Calu3 (cell line): ENCODE measurements at regions of chr17 and their contacts with region 1.

Region 1: DNA sequence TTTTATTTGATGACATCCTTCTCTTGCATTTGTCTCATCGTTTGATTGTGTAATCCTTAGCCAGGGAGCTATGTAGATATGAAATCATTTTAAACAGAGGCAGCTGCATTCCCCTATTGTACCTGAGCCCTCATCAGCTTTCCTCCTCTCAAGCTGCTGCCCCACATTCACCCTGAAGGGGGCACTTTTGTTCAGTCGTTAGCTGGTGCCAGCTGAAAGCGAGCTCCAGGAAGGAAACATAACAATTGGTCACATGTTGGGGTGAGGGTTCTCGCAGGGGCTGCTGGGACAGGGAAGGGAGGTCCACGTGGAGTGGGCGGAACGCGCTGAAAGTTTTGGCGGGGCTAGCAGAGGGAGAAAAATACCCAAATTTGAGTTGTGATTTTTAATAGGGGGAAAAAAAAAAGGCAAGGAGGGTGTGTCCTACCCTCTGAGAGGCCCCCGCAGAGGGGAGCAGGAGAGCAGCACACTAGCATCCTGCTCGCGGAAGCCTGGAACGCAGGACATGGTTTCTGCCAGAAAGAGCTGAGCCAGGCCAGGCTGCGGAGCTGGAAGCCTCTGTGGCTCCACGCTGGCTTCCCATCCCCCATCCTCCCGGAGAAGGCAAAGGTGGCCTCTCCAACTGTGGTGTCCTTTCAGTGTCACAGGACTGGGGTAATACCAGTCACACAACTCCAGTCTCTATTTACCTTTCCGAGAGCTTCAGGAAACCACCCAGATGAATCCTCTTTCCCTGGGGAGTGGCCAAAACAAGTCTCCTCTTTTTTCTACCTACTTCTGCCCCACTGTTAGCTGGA is 8.5 kb upstream of the MSL1 start:
- DNase-seq: peak; percentile 100
- H3K4me3 Mint-ChIP-seq: peak overlapping the region; percentile 65
- H3K27ac Mint-ChIP-seq: peak overlapping the region; percentile 74
- H3K4me1 Mint-ChIP-seq: peaks cover 58% of the 10 kb centered on the region
- H3K27me3 Mint-ChIP-seq: no peaks in the 10 kb centered on the region
- CTCF ChIP-seq: no peak

Region 2: DNA sequence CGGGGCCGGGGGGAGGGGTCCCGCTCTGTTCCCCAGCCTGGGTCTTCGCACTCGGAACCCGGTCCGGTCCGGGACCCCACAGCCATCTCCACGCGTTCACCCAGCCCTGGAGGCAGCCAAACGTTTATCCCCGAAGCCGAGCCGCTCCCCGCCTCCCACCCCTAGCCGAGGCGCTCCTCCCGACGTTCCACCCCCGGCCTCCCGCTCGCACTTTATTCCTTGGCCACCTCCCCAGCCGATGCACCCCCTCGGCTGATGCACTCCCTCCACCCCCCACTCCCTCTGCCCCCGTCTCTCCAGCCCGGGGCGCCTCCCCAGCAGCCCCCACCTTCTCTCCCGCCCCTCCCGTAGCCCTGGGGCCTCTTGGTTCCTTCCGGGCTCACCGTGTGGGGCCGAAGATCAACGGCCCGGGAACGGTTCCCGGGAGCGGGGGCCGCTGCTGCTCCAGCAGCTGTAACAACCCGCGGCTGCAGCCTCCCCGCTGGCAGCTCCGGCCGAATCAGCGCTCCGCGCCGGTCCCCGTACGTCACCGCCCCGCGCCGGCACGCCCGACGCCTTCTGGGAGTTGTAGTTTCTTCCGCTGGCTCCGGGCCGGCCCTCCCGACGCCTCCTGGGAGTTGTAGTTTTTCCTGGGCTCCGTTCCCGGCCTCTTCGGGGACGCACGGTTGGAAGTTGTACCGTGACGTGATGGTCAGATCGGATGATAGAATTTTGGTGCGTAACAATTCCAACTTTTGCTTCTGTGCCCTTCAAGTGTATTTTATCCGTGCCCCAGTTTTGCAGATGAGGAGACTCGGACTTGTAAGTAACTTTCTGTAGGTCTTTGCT is 186.0 kb before region 1 on chr17 and contains the starts of genes LRRC3C and ORMDL3:
- CTCF ChIA-PET with region 1: interaction called, 11 read pairs
- intact Hi-C with region 1: no loop called
- DNase-seq: no peak
- H3K4me3 Mint-ChIP-seq: peak within 1 kb of the TSS; percentile 74
- H3K27ac Mint-ChIP-seq: peak within 1 kb of the TSS; percentile 66
- H3K4me1 Mint-ChIP-seq: peaks cover 60% of the 10 kb centered on the region
- H3K27me3 Mint-ChIP-seq: no peaks in the 10 kb centered on the region
- CTCF ChIP-seq: no peak
- total RNA-seq, gene LRRC3C: not detected in 2 replicates
- total RNA-seq, gene ORMDL3: 1,738 and 1,968 TPM in 2 replicates

Region 3: DNA sequence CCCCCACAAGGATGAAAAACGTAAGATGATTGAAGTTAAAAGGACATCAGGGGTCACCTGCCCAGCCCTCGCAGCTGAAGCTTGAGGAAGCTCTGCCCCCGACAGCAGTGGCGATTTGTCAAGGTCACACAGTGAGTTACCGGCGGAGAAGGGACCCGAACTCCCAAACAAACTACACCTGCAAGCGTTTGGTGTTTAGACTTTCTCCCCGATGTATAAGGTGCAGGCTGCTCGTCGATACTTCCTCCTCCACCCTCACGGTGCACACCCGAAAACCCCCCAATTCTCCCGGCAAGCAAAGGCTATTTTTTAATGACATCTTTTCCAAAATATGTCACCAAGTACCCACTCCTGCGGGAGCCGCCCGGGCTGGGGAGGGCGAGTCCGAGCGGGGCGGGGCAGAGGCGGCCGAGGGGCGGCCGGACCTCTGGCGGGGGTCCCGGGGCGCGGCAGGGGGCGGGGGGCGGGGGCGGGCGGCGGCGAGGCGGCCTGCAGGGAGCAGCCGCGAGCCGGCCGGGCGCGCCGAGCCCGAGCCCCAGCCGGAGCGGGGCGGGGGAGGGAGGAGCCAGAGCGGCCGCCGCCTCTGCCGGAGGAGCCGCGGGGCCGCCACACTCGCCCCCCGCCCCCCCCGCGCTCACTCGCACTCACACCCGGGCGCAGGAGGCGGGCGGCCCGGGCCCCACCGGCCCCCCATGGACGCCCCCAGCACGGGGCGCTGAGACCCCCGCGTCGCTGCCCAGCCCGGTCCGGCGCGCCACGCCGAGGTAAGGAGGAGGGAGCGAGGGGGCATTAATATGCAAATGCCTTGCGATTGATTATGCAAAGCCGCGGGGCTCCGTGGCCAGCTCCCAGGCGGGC is 50.8 kb before region 1 on chr17 and contains the start of gene THRA:
- CTCF ChIA-PET with region 1: interaction called, 670 read pairs
- intact Hi-C with region 1: loop called (anchors 1 kb)
- DNase-seq: peak; percentile 100
- H3K4me3 Mint-ChIP-seq: peak within 1 kb of the TSS; percentile 54
- H3K27ac Mint-ChIP-seq: peak within 1 kb of the TSS; percentile 27
- H3K4me1 Mint-ChIP-seq: peaks cover 55% of the 10 kb centered on the region
- H3K27me3 Mint-ChIP-seq: peaks cover 52% of the 10 kb centered on the region
- CTCF ChIP-seq: no peak
- total RNA-seq, gene THRA: 107 and 133 TPM in 2 replicates

Region 4: DNA sequence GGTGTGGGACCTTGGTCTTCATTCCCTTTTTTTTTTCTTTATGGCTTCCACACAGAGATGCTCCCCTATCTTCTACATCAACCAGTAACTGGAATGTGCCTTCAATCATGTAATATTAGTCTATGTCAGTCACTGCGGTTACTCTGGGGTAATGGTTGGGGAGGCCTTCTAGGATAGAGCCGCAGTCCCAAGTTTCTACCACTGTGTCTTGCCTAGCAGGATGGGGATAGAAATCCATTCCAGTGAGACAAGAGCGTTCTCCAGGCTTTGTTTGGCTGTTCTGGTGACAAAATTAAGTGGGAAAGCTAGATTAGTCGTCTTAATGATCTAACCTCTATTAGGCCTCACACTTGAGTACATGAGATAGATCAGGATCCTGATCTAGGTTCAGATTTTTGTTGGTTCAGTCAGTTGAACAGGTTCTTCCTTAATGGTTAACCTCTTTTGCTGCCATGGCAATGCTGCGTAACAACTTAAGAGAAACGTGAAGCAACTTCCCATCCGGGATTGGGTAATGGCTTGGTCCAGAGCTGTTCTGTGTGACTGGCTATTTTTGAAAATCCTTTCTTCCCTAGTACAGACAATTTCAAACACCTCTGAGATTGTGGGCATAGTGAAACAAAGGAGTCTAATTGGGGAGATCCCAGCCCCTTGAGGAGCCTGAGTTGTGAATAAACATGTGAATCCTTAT is 17.2 kb after region 1 on chr17:
- CTCF ChIA-PET with region 1: interaction called, 386 read pairs
- intact Hi-C with region 1: no loop called
- DNase-seq: no peak
- H3K4me3 Mint-ChIP-seq: no peak overlapping the region
- H3K27ac Mint-ChIP-seq: peak overlapping the region; percentile 1
- H3K4me1 Mint-ChIP-seq: peaks cover 38% of the 10 kb centered on the region
- H3K27me3 Mint-ChIP-seq: no peaks in the 10 kb centered on the region
- CTCF ChIP-seq: no peak

Region 5: DNA sequence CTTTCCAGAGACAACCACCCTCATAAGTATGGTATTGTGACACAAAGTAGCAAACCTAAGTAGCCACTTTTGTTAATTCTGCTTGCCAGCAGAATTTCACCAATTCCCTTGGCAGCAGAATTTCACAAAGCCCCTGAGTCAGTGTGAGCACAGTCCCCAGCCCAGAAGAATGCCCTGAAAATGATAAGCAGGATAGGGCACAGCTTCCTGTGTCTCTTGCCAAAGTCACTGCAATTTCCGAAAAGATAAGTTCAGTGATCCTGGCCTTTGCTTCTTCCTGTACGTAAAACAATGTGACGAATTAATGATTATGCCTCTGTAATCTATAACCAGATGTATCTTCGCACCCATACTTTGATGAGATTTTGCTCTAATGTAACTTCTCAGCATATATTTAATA is 89.8 kb after region 1 on chr17:
- CTCF ChIA-PET with region 1: interaction called, 37 read pairs
- intact Hi-C with region 1: no loop called
- DNase-seq: no peak
- H3K4me3 Mint-ChIP-seq: no peak overlapping the region
- H3K27ac Mint-ChIP-seq: no peak overlapping the region
- H3K4me1 Mint-ChIP-seq: peaks cover 7% of the 10 kb centered on the region
- H3K27me3 Mint-ChIP-seq: no peaks in the 10 kb centered on the region
- CTCF ChIP-seq: no peak

Region 6: DNA sequence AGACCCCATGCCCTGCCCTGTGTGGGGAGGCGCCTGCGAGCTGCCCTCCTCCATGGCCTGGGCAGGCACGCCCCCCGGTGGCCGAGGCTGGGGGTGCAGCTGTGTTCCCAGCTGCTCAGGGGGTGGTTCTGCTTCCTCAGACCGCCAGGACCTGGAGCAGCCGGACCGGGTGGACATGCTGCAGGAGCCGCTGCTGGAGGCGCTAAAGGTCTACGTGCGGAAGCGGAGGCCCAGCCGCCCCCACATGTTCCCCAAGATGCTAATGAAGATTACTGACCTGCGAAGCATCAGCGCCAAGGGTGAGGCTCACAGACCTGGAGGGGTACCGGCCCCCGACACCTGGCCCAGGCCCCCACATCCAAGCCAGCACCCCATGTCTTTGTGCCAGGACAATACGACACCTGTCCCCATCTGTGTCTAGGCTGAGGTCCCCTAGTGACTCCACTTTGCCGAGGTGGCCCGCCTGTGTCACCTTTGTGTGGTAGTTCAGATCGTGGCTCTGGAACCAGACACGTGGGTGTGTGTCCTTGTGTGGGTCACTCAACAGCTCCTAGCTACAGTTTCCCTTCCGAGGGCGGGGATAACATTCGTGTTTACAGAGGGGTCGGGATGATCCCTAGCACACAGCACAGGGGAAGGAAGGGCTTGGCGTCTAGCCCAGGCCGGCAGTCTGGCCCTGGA is 242.0 kb after region 1 on chr17:
- CTCF ChIA-PET with region 1: interaction called, 11 read pairs
- intact Hi-C with region 1: no loop called
- DNase-seq: peak; percentile 100
- H3K4me3 Mint-ChIP-seq: no peak overlapping the region
- H3K27ac Mint-ChIP-seq: no peak overlapping the region
- H3K4me1 Mint-ChIP-seq: peaks cover 29% of the 10 kb centered on the region
- H3K27me3 Mint-ChIP-seq: no peaks in the 10 kb centered on the region
- CTCF ChIP-seq: no peak

Region 7: DNA sequence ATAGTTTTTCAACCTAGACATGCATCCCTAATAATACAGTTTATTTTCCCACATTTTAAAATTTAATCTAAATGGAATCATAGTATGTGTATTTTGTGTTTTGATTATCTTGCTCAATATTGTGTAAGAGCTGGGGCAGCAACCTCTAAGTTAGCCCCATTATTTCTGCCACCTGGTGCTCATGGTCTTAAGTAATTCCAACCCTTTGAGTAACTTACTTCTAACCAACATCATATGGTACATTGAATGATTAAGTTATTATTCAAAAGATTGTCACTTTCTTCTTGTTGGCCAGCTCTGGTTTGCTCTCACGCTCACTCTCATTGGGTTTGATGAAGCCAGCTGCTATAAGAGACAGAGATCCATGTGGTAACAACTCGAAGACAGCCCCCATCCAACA is 1058.6 kb after region 1 on chr17:
- CTCF ChIA-PET with region 1: no interaction called
- intact Hi-C with region 1: no loop called
- DNase-seq: no peak
- H3K4me3 Mint-ChIP-seq: no peak overlapping the region
- H3K27ac Mint-ChIP-seq: no peak overlapping the region
- H3K4me1 Mint-ChIP-seq: no peaks in the 10 kb centered on the region
- H3K27me3 Mint-ChIP-seq: no peaks in the 10 kb centered on the region
- CTCF ChIP-seq: no peak